ENCODE measurements at regions of chr2 and their contacts with region 1.

Region 1: DNA sequence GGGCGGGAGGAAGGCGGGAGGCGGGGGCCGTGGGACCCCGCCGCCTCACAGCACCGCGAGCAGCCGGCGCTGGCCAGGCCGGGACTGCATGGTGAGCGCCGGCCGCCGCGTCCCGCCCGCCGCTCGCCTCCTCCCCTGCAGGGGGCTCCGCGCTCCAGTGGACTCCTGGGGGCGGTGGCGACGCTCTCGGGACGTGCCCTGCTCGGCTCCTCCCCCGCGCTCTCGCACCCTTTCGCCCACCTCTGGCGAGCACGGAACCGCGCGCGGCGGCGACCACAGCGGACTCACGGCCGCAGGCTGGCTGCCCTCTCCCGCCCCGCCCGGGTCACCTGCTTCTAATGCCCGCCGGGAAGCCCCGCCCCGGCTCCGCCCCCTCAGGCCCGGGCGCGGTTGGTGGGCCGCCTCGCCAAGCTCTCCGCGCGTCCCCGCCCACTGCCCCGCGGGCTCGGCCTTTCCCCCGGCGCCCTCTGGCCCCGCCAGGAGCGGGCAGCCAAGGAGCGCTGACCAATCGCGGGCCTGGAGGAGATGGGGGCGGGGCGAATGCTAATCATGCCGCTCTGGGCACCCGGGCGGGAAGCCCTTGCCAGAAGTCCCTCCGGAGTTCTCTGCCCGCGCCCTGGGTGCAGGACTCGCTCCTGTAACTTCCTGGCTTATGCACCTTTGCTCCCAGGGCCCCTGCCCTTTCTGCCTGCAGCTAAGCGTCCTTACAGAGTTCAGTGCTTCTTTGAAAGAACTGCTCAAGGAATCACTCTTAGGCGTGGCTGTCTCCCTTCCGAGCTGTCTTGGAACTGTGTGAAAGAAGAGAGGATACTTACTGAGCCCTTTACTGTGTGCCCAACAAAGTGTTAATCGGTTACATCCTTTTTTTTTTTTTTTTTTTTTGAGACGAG is at the start of gene FZD5:
- DNase-seq: peak; percentile 98
- ATAC-seq: peak; percentile 87
- H3K4me3 ChIP-seq: peak within 1 kb of the TSS; percentile 80 to 98 (median 88)
- H3K27ac ChIP-seq: peak within 1 kb of the TSS; percentile 92
- H3K4me1 ChIP-seq: peaks cover 55% of the 10 kb centered on the region
- H3K27me3 ChIP-seq: no peaks in the 10 kb centered on the region; a peak in 1 of 5 replicates
- CTCF ChIP-seq: peak; percentile 87
- EP300 ChIP-seq: peak in 1 of 2 experiments; percentile 44; a peak in 2 of 4 replicates
- POLR2A ChIP-seq: peak in 1 of 2 experiments; percentile 91; a peak in 2 of 4 replicates
- RAD21 ChIP-seq: peak; percentile 100
- total RNA-seq, gene FZD5: 28.9 and 34.3 TPM in 2 replicates

Region 2: DNA sequence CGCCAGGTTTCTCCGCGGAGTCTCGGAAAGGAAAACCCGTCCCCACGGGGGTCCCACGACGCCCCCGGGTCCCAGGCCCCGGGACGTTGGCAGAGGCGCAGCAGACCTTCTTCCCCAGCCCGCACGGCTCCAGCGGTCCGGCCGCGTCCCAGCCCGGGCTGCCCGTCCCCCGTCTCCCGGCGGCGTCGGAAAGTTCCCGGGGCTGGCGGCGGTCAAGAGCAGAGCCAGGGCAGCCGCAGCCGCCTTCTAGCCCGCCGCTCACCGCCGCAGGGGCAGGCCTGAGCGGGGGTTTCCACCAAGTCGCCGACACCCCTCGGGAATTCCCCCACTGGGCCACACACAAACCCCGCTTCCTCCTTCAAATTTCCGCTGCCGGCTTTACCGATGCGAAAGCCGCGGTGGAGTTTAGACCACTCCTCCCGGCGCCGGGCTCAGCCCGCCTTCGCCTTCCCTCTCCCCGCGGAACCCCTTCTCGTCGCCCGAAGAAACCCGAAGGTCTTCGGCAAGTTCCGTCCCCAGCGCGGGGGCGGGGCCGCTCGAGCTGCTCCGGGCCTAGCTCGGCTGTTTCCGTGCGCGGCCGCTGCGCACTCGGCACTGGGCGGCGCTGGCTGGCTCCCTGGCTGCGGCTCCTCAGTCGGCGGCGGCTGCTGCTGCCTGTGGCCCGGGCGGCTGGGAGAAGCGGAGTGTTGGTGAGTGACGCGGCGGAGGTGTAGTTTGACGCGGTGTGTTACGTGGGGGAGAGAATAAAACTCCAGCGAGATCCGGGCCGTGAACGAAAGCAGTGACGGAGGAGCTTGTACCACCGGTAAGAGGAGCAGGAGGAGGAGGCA is 240.3 kb before region 1 on chr2 and contains the start of gene CREB1:
- CTCF ChIA-PET with region 1: no interaction called
- POLR2A ChIA-PET with region 1: no interaction called
- in situ Hi-C with region 1: no loop called
- intact Hi-C with region 1: no loop called
- DNase-seq: peak; percentile 94
- ATAC-seq: peak; percentile 96
- H3K4me3 ChIP-seq: peak within 1 kb of the TSS; percentile 93 to 98 (median 94)
- H3K27ac ChIP-seq: peak within 1 kb of the TSS; percentile 96
- H3K4me1 ChIP-seq: peaks cover 44% of the 10 kb centered on the region
- H3K27me3 ChIP-seq: no peaks in the 10 kb centered on the region; a peak in 1 of 5 replicates
- CTCF ChIP-seq: peak; percentile 73
- EP300 ChIP-seq: no peak; a peak in 1 of 4 replicates
- POLR2A ChIP-seq: peak; percentile 90 to 94
- RAD21 ChIP-seq: peak; percentile 30
- total RNA-seq, gene CREB1: 51.9 and 79.5 TPM in 2 replicates

Region 3: DNA sequence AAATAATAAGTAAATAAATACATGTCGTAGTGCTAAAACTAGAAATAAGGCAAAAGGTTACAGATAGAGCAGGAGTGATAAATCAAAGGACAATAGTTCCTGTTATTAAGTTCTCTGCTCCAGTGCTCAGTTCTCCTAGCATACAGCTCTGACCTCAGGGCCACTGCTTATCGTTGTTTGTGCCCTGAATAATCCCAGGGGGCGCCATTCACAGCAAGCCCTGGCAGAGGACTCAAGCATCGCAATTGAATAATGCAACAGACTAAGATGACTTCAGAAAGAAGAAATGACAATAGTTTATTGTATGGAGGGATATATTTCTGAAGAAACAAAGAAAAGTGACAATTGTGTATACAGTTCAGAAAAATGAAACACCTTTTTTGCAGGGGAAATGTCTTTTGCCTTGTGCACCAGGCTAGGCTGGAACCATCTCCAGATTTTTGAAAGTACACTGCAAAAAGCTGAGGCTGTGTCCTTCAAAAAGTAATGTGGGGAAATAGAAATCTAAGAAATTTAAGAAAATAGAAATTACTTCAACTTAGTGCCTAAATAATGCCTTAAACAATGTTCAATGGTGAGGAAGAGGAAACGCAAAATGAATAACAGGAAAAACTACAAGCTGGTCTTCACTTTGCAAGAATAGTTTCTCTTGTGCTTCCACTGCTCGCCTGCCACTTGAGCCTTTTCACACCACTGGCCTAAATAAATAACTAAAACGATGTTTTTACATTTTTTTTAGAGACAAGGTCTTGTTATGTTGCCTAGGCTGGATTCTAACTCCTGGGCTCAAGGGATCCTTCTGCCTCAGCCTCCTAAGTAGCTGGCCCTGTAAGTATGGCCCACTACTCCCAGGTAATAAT is 77.4 kb before region 1 on chr2:
- CTCF ChIA-PET with region 1: no interaction called
- POLR2A ChIA-PET with region 1: no interaction called
- in situ Hi-C with region 1: no loop called
- intact Hi-C with region 1: no loop called
- DNase-seq: peak; percentile 58
- ATAC-seq: peak; percentile 91
- H3K4me3 ChIP-seq: no peak overlapping the region
- H3K27ac ChIP-seq: no peak overlapping the region
- H3K4me1 ChIP-seq: peaks cover 46% of the 10 kb centered on the region
- H3K27me3 ChIP-seq: 0 out of 5 replicates have a peak, but pooled peaks cover 0 to 4% of the 10 kb centered on the region in 2 experiments
- CTCF ChIP-seq: peak; percentile 75
- EP300 ChIP-seq: no peak
- POLR2A ChIP-seq: no peak
- RAD21 ChIP-seq: peak; percentile 63

Region 4: GRCh38 chr2:207782238-207783030 is 12.6 kb after region 1 on chr2:
- CTCF ChIA-PET with region 1: no interaction called
- POLR2A ChIA-PET with region 1: interaction called, 57 read pairs
- in situ Hi-C with region 1: no loop called
- intact Hi-C with region 1: no loop called
- DNase-seq: peak; percentile 92
- ATAC-seq: peak; percentile 96
- H3K4me3 ChIP-seq: no peak overlapping the region
- H3K27ac ChIP-seq: peak overlapping the region; percentile 1
- H3K4me1 ChIP-seq: peaks cover 96% of the 10 kb centered on the region
- H3K27me3 ChIP-seq: no peaks in the 10 kb centered on the region
- CTCF ChIP-seq: peak; percentile 13; the same call in 1 of the 2 replicates
- EP300 ChIP-seq: peak in 1 of 2 experiments; percentile 63; a peak in 2 of 4 replicates
- POLR2A ChIP-seq: no peak
- RAD21 ChIP-seq: peak; percentile 21; the same call in 1 of the 2 replicates

Region 5: DNA sequence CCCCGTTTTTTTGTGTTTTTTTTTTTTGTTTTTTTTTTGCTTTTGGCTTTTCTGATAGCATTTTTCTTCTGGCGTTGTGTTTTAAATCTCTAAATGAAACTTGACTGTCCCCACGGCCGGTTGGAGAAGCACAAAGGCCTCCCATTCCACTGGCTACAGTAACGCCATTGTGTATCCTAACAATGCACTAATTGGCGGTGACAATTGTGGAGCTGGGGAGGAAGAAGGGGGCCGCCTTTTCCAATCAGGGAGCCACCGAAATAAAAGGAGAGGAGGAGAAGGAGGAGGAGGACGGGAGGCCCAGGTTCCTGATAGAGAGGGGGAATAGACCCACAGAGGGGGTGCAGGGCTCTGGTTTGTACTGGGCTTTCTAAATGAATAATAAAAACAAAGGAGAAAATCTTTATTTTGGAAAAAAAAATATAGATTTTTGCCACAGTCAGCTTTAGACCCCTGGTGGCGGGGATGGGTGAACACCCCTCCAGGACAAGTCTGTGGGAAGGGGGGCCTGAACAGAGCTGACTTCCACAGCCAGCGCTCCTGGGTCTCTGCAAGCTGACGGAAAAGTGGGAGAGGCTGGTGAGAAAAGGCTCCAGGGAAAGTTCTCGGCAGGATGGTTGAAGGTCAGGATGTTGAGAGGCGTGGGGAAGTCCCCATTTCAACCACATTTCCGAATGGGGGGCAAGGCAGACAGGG is 43.5 kb after region 1 on chr2:
- CTCF ChIA-PET with region 1: interaction called, 10 read pairs
- POLR2A ChIA-PET with region 1: interaction called, 204 read pairs
- in situ Hi-C with region 1: no loop called
- intact Hi-C with region 1: loop called (anchors 5 kb)
- DNase-seq: no peak
- ATAC-seq: 0 out of 3 replicates have a peak, but pooled peaks have one; percentile 6
- H3K4me3 ChIP-seq: no peak overlapping the region
- H3K27ac ChIP-seq: no peak overlapping the region
- H3K4me1 ChIP-seq: peaks cover 88% of the 10 kb centered on the region
- H3K27me3 ChIP-seq: no peaks in the 10 kb centered on the region
- CTCF ChIP-seq: no peak; the same call in 1 of the 2 replicates
- EP300 ChIP-seq: no peak
- POLR2A ChIP-seq: no peak
- RAD21 ChIP-seq: 0 out of 2 replicates have a peak, but pooled peaks have one; percentile 12

Region 6: DNA sequence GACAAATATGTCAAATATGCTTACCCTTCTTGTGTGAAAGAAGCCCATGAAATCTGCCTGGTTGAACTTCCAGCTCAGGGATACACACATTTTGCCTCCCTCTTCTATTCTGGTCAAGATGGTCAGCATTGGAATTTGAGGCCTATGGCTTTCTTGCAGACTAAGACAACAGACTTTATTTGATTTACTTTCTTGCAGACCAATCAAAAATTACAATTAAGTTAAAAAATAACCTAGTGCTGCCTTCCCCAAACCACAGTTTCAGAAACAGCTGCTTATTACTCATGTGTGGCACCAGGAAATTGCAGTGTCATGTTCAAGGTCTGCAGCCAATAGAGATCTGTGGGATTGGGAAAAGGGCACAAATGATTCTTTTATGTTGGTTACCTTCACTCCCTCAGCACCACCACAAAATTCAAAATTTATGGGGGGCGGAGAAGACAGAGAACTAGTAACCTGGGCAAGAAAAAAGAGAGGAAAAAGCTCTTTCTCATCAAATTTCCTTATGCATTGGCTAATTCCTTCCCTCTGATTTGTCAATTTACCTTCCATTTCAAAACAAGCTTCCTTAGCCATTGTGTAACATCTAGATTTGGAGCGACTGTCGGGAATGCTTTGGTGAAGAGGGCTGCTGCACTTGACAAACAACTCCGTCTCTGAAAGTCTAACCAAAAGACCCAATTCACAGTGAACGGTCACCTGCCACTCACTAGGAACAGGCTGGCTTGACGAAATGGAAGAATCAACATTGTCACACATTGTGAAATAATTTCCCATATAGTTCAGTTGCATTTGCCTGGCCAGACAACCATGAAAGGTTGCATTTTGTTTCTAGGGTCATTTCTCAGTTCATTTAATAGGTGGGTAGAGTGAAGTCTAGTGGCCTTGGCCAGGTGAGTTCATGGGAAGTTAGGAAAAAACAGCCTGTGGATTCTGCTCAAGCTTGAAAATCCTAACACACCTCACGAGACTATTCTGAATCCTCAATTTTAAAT is 100.2 kb after region 1 on chr2:
- CTCF ChIA-PET with region 1: no interaction called
- POLR2A ChIA-PET with region 1: interaction called, 28 read pairs
- in situ Hi-C with region 1: no loop called
- intact Hi-C with region 1: loop called (anchors 1 kb)
- DNase-seq: peak; percentile 100
- ATAC-seq: peak; percentile 95
- H3K4me3 ChIP-seq: peak overlapping the region; percentile 3 to 10 (median 3); a peak in 4 of 6 replicates
- H3K27ac ChIP-seq: peak overlapping the region; percentile 81
- H3K4me1 ChIP-seq: peaks cover 57% of the 10 kb centered on the region
- H3K27me3 ChIP-seq: no peaks in the 10 kb centered on the region
- CTCF ChIP-seq: no peak
- EP300 ChIP-seq: peak; percentile 97 to 99
- POLR2A ChIP-seq: peak in 1 of 2 experiments; percentile 57; a peak in 2 of 4 replicates
- RAD21 ChIP-seq: peak; percentile 36; the same call in 1 of the 2 replicates

Region 7: GRCh38 chr2:207902821-207903220 is 133.0 kb after region 1 on chr2:
- CTCF ChIA-PET with region 1: interaction called, 3 read pairs
- POLR2A ChIA-PET with region 1: interaction called, 25 read pairs
- in situ Hi-C with region 1: no loop called
- intact Hi-C with region 1: no loop called
- DNase-seq: no peak
- ATAC-seq: no peak
- H3K4me3 ChIP-seq: no peak overlapping the region
- H3K27ac ChIP-seq: no peak overlapping the region
- H3K4me1 ChIP-seq: peaks cover 89% of the 10 kb centered on the region
- H3K27me3 ChIP-seq: no peaks in the 10 kb centered on the region
- CTCF ChIP-seq: no peak
- EP300 ChIP-seq: no peak
- POLR2A ChIP-seq: no peak
- RAD21 ChIP-seq: no peak

Region 8: DNA sequence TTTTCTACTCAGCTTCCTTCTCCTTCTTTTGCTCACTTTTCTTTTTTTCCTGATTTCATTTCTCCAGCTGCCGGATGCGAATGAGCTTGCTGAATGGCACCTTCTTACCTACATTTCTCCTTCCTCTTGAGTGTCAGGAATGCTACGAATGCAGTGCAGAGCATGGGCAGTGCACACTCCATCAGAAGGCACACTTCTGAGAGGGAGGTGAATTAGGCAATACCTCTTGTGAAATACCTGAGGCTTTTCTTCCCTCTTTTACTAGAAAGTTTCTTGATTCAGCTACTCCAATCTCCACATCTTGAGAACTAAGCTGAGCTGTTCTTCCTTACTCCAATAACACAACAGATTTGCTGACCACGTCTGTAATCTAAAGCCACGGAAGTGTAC is 204.4 kb after region 1 on chr2:
- CTCF ChIA-PET with region 1: interaction called, 7 read pairs
- POLR2A ChIA-PET with region 1: interaction called, 7 read pairs
- in situ Hi-C with region 1: loop called (anchors 5 kb)
- intact Hi-C with region 1: loop called (anchors 1 kb)
- DNase-seq: no peak
- ATAC-seq: no peak
- H3K4me3 ChIP-seq: no peak overlapping the region
- H3K27ac ChIP-seq: no peak overlapping the region
- H3K4me1 ChIP-seq: peaks cover 28% of the 10 kb centered on the region
- H3K27me3 ChIP-seq: no peaks in the 10 kb centered on the region
- CTCF ChIP-seq: no peak
- EP300 ChIP-seq: no peak
- POLR2A ChIP-seq: no peak
- RAD21 ChIP-seq: no peak

Measured in HepG2 (cell line).